Aorta (tissue), 5 donors: ENCODE measurements at regions of chr7 and their contacts with region 1.

Region 1: DNA sequence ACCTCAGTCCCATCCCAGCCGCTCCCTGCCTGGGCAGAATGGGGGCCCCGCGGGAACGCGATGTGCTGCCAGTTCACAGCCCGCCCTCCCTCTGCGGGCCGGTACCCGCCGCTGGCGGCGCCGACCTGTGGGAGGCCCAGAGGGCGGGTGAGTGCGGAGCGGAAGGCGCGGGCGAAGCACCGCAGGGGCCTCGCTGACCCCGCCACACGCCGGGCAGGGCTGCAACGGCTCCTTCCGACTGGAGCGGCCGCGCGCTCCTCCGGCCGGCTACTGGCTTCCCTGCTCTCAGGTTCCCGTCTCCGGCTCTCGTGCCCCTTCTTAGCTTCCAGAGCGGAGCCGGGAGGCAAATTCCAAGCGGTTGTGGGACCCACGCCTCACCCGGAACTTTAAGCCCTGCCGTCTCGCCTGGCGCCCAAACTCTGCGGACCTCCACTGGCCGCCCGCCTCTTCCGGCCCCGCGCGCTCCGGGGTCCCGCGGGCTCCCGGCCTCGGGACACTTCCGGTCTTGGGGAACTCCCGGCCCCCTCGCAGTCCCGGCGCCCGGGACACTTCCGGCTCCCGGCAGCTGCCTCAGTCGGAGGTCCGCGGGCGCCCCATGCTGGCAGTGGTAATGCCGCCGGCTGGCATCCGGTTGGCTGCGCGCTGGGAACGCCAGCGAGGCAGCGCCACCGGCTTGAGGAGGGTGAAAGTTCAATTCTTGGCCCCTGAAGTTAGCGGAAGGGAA is at the start of gene CYREN:
- DNase-seq: peak; percentile 98 to 99
- ATAC-seq: peak; percentile 98
- H3K4me3 ChIP-seq: peak within 1 kb of the TSS; percentile 30 to 74
- H3K27ac ChIP-seq: peak within 1 kb of the TSS; percentile 52 to 94
- H3K4me1 ChIP-seq: peaks cover 2 to 13% of the 10 kb centered on the region in 2 donors
- H3K27me3 ChIP-seq: no peaks in the 10 kb centered on the region
- total RNA-seq, gene CYREN: 22.7 to 31.7 TPM

Region 2: GRCh38 chr7:134963036-134963435 is 207.4 kb before region 1 on chr7:
- intact Hi-C with region 1: loop called in 1 of 2 experiments (anchors 1 kb)
- DNase-seq: no peak
- ATAC-seq: peak; percentile 46
- H3K4me3 ChIP-seq: no peak overlapping the region
- H3K27ac ChIP-seq: peak overlapping the region in 1 of 2 donors; percentile 57
- H3K4me1 ChIP-seq: peaks cover 2 to 9% of the 10 kb centered on the region in 2 donors
- H3K27me3 ChIP-seq: no peaks in the 10 kb centered on the region

Region 3: GRCh38 chr7:134986363-134987251 is 183.8 kb before region 1 on chr7 and contains the start of gene AGBL3:
- intact Hi-C with region 1: loop called in 1 of 2 experiments (anchors 5 kb)
- DNase-seq: peak; percentile 98 to 99
- ATAC-seq: peak; percentile 99
- H3K4me3 ChIP-seq: peak within 1 kb of the TSS; percentile 65 to 83
- H3K27ac ChIP-seq: peak within 1 kb of the TSS; percentile 67 to 96
- H3K4me1 ChIP-seq: peaks cover 2 to 5% of the 10 kb centered on the region in 2 donors
- H3K27me3 ChIP-seq: no peaks in the 10 kb centered on the region
- total RNA-seq, gene AGBL3: 2.5 to 8.8 TPM

Region 4: GRCh38 chr7:135238112-135238744 is 67.8 kb after region 1 on chr7:
- intact Hi-C with region 1: no loop called
- DNase-seq: no peak
- ATAC-seq: no peak
- H3K4me3 ChIP-seq: no peak overlapping the region
- H3K27ac ChIP-seq: no peak overlapping the region
- H3K4me1 ChIP-seq: no peaks in the 10 kb centered on the region
- H3K27me3 ChIP-seq: no peaks in the 10 kb centered on the region

Region 5: GRCh38 chr7:135385209-135385608 is 214.8 kb after region 1 on chr7:
- intact Hi-C with region 1: no loop called
- DNase-seq: no peak
- ATAC-seq: no peak
- H3K4me3 ChIP-seq: no peak overlapping the region
- H3K27ac ChIP-seq: no peak overlapping the region
- H3K4me1 ChIP-seq: peaks cover 0 to 2% of the 10 kb centered on the region in 2 donors
- H3K27me3 ChIP-seq: no peaks in the 10 kb centered on the region